ENCODE measurements at regions of chr1 and their contacts with region 1.

Region 1: DNA sequence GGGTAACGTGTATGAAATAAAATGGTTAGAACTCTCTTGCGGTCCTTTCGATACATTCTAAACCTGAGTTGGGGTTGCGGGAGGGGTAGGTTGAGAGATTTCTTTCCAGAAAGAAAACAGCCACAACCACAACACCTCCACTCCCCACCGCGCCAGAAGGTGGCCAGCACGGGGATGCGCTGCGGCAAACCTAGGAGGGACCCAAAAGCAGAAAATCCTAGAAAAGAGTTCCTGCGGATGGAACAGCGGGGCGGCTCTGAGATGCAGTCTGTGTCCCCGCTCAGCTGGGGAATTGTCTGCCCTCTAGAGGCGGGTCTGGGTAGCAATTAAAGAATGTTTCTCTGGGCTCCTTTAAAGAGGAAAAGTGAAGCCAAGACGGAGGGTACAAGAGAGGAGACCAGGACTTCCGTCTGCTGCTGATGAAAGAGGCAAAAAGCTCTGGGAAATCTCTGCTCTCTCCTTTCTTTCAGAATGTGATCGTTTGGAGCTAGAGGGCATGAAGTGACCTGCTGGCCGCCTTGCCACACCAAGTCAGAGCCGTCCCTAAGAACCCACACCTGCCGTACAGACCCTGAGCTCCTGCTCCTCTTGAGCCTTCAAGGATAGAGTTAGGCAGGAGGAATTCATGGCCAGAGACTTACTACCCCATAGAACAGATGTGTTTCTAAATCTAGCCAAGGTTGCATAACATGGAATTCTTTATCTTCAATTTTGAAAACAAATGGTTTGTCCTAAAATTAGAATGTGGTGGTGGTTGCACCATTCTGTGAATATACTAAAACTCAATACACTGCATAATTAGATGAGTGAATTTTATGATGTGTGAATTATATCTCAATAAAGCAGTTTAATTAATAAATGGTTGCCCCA is 46.5 kb upstream of the COA6 start:
- DNase-seq: peak; percentile 81
- H3K4me3 Mint-ChIP-seq: peak overlapping the region; percentile 75
- H3K27ac Mint-ChIP-seq: peak overlapping the region; percentile 41
- H3K4me1 Mint-ChIP-seq: peaks cover 13% of the 10 kb centered on the region
- H3K27me3 Mint-ChIP-seq: peaks cover 14% of the 10 kb centered on the region

Region 2: DNA sequence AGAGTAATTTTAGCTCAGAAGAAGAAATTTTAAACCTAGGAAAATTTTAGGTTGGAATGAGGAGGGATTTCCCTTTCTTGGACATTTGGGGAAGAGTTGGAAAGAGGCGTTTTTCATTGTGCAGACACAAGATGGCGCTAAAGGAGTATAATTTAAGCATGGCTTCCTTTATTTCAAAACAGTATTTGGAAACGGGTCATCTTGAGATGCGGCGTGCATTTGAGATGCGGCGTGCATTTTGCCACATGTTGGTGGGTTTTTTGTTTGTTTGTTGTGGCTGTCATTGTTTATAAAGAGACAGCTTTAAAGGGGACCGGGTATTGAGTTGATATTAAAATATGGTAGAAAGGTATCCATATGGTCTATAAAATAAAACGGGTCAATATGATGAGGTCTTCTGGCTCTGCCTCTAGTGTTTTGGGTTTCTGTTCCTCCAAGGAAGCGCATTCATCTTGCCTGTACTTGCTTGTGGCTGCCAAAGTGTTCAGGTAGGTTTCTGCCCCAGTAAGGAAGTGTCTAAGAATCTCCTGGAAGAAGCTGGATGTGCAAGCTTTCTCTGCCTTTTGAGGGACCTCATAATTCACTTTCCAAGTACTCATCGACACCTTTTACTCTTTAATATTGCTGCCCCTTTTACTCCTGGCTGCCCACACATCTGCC is 212.0 kb before region 1 on chr1:
- CTCF ChIA-PET with region 1: interaction called, 4 read pairs
- intact Hi-C with region 1: loop called (anchors 1 kb)
- DNase-seq: peak; percentile 43
- H3K4me3 Mint-ChIP-seq: peak overlapping the region; percentile 41
- H3K27ac Mint-ChIP-seq: no peak overlapping the region
- H3K4me1 Mint-ChIP-seq: peaks cover 6% of the 10 kb centered on the region
- H3K27me3 Mint-ChIP-seq: peaks cover 27% of the 10 kb centered on the region

Region 3: DNA sequence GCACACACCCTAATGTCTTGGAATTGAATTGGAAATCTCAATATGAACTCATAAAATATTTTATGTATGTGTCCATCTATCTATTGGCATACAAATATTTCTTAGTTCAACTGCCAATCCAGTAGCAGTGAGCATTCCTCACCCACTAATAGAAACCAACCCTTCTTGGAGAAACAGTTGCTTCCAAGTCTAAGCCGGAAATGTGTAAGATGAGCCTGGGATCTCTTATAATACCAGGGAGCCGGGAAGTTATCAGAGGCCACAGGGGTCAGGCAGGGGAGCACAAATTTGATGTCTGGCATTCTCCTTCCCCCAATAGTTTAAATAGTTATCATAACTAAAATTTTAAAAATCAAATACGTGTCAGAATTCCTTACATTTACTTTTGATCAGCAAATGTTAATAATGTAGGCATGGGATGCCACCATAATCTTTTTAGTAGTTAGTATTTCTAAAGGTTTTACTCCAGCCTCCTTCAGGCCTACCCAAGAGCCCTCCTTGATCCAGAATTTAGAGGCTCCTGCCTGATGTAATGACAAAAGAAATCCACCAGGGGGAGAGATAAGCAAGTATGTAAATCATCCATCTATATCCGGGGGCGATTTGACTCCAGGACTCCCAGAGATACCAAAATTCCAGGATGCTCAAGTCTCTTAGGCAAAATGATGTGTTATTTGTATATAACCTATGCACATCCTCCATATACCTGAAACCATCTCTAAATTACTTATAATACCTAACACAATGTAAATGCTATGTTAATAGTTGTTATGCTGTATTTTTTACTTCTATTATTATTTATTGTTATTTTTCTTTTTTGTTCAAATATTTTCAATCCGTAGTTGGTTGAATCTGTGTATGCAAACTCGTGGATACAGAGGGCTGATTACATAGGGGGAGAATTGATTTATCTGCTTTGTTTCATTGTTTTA is 172.1 kb before region 1 on chr1:
- CTCF ChIA-PET with region 1: interaction called, 3 read pairs
- intact Hi-C with region 1: loop called (anchors 1 kb)
- DNase-seq: peak; percentile 31
- H3K4me3 Mint-ChIP-seq: no peak overlapping the region
- H3K27ac Mint-ChIP-seq: no peak overlapping the region
- H3K4me1 Mint-ChIP-seq: no peaks in the 10 kb centered on the region
- H3K27me3 Mint-ChIP-seq: no peaks in the 10 kb centered on the region

Region 4: GRCh38 chr1:234197839-234198238 is 128.9 kb before region 1 on chr1:
- CTCF ChIA-PET with region 1: no interaction called
- intact Hi-C with region 1: no loop called
- DNase-seq: no peak
- H3K4me3 Mint-ChIP-seq: no peak overlapping the region
- H3K27ac Mint-ChIP-seq: no peak overlapping the region
- H3K4me1 Mint-ChIP-seq: no peaks in the 10 kb centered on the region
- H3K27me3 Mint-ChIP-seq: peaks cover 25% of the 10 kb centered on the region

Region 5: DNA sequence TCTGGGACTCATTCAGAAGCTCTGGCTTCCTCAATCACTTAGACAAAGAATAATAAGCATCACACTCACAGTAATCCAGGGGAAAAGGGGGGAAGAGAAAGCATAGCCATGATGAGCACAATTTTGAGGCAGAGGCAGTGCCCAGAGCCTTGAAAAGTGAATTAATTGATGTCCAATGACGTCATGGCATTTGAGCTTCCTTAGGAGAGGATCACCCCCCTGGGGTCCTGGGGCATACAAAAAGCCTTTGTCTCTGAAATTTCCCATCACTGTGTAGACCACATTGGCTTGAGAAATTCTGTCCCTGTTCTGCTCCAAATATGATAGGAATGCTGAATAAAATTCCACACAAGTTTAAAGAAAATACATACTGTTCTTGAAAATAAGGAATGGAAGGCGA is 37.8 kb before region 1 on chr1:
- CTCF ChIA-PET with region 1: no interaction called
- intact Hi-C with region 1: no loop called
- DNase-seq: no peak
- H3K4me3 Mint-ChIP-seq: no peak overlapping the region
- H3K27ac Mint-ChIP-seq: no peak overlapping the region
- H3K4me1 Mint-ChIP-seq: no peaks in the 10 kb centered on the region
- H3K27me3 Mint-ChIP-seq: peaks cover 6% of the 10 kb centered on the region

Region 6: GRCh38 chr1:234373064-234373958 is 46.6 kb after region 1 on chr1 and contains the start of gene COA6:
- CTCF ChIA-PET with region 1: interaction called, 10 read pairs
- intact Hi-C with region 1: loop called (anchors 1 kb)
- DNase-seq: peak; percentile 90
- H3K4me3 Mint-ChIP-seq: peak within 1 kb of the TSS; percentile 96
- H3K27ac Mint-ChIP-seq: peak within 1 kb of the TSS; percentile 98
- H3K4me1 Mint-ChIP-seq: peaks cover 54% of the 10 kb centered on the region
- H3K27me3 Mint-ChIP-seq: no peaks in the 10 kb centered on the region
- total RNA-seq, gene COA6: 45.8 to 50.2 TPM

Region 7: DNA sequence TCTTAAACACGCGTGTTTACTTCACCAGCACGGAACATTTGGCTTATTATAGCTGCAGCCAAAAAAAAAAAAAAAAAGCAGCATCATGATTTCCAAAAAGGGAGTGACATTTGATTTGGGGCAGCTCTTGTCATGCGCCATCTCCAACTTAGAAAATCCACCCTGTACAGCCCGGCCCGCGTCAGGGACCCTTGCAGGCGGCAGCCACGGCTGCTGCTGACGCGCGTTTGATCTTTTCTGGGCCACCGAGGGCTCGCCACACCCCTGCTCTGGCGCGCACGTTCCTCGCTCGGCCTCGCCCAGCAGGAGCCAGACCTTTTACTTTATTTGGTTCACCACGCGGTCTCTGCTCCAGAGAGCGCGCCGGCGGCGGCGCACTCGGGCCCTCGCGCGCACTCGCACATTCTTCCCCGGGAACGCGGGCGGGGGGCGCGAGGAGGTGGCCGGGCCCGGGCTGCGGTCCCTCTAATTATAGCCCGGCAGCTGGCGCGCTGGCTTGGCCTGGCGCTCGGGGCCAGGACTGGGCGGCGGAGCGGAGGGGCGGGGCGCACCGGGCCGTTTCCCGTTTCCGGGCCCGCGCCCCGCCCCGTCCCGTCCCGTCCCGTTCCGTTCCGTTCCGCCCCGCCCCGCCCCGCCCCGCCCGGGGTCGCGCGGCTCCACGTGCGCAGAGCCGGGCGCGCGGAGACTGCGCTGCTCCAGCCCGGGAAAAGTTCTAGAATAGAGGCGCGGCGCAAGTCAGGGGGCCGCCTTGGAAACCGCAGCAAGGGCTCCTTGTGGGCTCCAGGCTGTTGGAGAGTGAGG is 273.1 kb after region 1 on chr1:
- CTCF ChIA-PET with region 1: no interaction called
- intact Hi-C with region 1: loop called (anchors 10 kb)
- DNase-seq: peak; percentile 74
- H3K4me3 Mint-ChIP-seq: peak overlapping the region; percentile 83
- H3K27ac Mint-ChIP-seq: peak overlapping the region; percentile 99
- H3K4me1 Mint-ChIP-seq: peaks cover 50% of the 10 kb centered on the region
- H3K27me3 Mint-ChIP-seq: no peaks in the 10 kb centered on the region